Activated naive CD4-positive, alpha-beta T cell treated with anti-CD3 and anti-CD28 coated beads, Interleukin-2, amount 10 ng/mL, durations not matched to agents 7 days and 5 days (primary cell): ENCODE measurements at regions of chr13 and their contacts with region 1.

Region 1: GRCh38 chr13:99269627-99270241 is 11.6 kb upstream of the GPR18 start:
- DNase-seq: peak; percentile 38
- H3K4me3 Mint-ChIP-seq: no peak overlapping the region
- H3K27ac Mint-ChIP-seq: no peak overlapping the region
- H3K4me1 Mint-ChIP-seq: peaks cover 56% of the 10 kb centered on the region
- H3K27me3 Mint-ChIP-seq: no peaks in the 10 kb centered on the region

Region 2: GRCh38 chr13:99176309-99177276 is 93.1 kb before region 1 on chr13:
- CTCF ChIA-PET with region 1: interaction called, 282 read pairs
- DNase-seq: peak; percentile 85
- H3K4me3 Mint-ChIP-seq: no peak overlapping the region
- H3K27ac Mint-ChIP-seq: peak overlapping the region; percentile 77
- H3K4me1 Mint-ChIP-seq: peaks cover 42% of the 10 kb centered on the region
- H3K27me3 Mint-ChIP-seq: peaks cover 28% of the 10 kb centered on the region

Region 3: DNA sequence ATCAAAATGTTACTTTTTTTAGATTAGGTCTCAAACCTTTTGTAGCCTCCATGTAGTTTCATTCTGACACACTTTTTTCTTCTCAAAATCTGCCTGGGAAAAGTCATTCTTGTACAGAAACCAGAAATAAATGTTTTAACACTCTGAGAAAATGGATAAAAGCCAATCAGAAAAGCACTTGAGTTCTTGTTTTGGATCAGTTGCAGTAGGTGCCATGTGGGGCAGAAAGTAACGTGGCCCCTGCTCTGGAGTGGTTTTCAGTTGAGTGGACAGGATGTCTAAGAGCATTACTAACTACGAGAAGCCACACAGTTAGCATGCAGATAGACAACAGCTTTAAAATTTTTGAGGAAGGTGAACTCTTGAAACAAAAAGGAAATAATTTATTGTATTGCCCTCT is 18.4 kb after region 1 on chr13:
- CTCF ChIA-PET with region 1: interaction called, 18 read pairs
- DNase-seq: no peak
- H3K4me3 Mint-ChIP-seq: no peak overlapping the region
- H3K27ac Mint-ChIP-seq: peak overlapping the region; percentile 81
- H3K4me1 Mint-ChIP-seq: peaks cover 73% of the 10 kb centered on the region
- H3K27me3 Mint-ChIP-seq: no peaks in the 10 kb centered on the region

Region 4: DNA sequence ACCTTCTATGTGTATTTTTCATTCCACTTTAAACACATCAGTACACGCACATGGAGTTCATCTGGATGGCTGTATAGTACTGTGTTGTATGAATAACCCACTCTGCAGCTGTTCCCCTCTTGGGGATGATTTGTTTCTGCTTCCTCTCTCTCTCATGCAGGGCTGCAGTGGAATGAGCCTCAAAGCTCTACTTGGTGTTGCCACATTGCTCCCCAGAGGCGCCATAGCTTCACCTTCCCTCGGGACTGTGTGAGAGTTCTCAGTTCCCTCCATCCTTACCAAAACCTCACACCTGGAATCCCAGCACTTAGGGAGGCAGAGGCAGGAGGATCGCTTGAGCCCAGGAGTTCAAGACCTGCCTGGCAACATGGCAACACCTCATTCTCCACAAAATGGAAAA is 65.9 kb after region 1 on chr13:
- CTCF ChIA-PET with region 1: interaction called, 10 read pairs
- DNase-seq: no peak
- H3K4me3 Mint-ChIP-seq: no peak overlapping the region
- H3K27ac Mint-ChIP-seq: no peak overlapping the region
- H3K4me1 Mint-ChIP-seq: peaks cover 44% of the 10 kb centered on the region
- H3K27me3 Mint-ChIP-seq: no peaks in the 10 kb centered on the region

Region 5: DNA sequence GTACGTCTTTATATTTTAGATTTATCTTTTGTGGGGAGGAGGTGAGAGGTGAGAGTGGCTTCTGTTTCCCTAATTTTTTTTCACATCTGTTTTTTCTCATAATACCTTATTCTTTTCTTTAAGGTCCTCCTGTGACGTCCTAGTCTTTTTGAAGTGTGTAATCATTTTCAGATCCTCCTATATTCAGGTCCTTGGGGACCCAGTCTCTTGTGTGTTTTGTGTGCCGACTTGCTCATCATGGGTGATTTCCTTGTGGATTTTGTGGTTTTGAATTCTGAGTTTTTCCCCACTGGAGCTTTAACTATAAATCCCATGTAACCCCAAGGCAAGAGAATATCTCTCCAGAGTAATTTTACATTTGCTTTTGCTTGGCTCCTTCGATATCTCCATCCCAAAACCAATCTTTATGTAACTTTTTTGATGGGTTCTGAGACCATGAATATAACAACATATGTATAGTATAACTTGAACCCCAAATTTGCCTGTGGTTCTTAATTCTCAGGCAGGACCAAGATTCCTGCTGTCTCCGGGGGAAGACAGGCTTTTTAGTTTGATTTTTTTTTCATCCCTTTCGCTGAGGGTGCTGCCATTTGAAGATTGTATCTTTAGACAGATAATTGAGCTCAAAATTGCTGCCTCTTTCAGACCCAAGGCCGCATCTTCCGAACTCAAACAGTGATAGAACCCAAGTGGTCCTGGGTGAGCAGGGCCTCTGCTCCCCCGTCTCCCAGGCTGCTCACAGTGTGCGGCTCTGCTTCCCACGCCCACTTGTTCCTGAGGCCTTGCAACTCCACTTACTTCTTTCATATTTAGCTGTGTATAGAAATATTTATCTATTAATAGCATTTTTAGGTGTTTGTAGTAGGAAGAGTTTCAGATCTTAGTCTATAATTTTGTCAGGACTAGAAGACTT is 96.6 kb after region 1 on chr13:
- CTCF ChIA-PET with region 1: interaction called, 14 read pairs
- DNase-seq: no peak
- H3K4me3 Mint-ChIP-seq: peak overlapping the region; percentile 18
- H3K27ac Mint-ChIP-seq: peak overlapping the region; percentile 90
- H3K4me1 Mint-ChIP-seq: peaks cover 90% of the 10 kb centered on the region
- H3K27me3 Mint-ChIP-seq: no peaks in the 10 kb centered on the region

Region 6: GRCh38 chr13:99386911-99387788 is 117.4 kb after region 1 on chr13:
- CTCF ChIA-PET with region 1: interaction called, 212 read pairs
- DNase-seq: peak; percentile 90
- H3K4me3 Mint-ChIP-seq: no peak overlapping the region
- H3K27ac Mint-ChIP-seq: peak overlapping the region; percentile 21
- H3K4me1 Mint-ChIP-seq: peaks cover 66% of the 10 kb centered on the region
- H3K27me3 Mint-ChIP-seq: no peaks in the 10 kb centered on the region

Region 7: DNA sequence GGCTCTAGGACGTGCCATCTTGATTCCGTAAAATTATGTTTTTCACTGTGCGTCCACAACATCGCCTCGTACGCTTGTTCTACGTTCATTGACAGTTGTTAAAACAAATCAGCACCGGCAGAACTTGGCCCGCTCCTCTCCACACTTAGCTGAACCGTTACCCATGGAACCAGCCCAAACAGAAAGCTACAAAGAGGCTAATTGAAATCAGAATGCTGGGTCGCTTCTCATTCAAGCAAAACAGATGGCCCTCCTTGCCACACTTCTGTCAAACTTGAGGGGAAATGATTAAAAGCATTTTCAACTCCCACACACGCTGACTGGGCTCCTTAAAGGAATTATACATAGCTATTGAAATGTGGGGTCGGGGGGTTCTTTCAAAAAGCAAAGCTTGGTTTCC is 303.2 kb after region 1 on chr13:
- CTCF ChIA-PET with region 1: no interaction called
- DNase-seq: no peak
- H3K4me3 Mint-ChIP-seq: no peak overlapping the region
- H3K27ac Mint-ChIP-seq: no peak overlapping the region
- H3K4me1 Mint-ChIP-seq: peaks cover 5% of the 10 kb centered on the region
- H3K27me3 Mint-ChIP-seq: peaks cover 3% of the 10 kb centered on the region